ENCODE measurements at regions of chr1 and their contacts with region 1.

Region 1: GRCh38 chr1:201119206-201120197 is 7.3 kb upstream of the CACNA1S start:
- DNase-seq: no peak
- H3K4me3 ChIP-seq: no peak overlapping the region
- H3K27ac ChIP-seq: no peak overlapping the region
- H3K4me1 ChIP-seq: peaks cover 8% of the 10 kb centered on the region
- H3K27me3 ChIP-seq: no peaks in the 10 kb centered on the region
- CTCF ChIP-seq: peak; percentile 28; the same call in 1 of the 2 replicates

Region 2: DNA sequence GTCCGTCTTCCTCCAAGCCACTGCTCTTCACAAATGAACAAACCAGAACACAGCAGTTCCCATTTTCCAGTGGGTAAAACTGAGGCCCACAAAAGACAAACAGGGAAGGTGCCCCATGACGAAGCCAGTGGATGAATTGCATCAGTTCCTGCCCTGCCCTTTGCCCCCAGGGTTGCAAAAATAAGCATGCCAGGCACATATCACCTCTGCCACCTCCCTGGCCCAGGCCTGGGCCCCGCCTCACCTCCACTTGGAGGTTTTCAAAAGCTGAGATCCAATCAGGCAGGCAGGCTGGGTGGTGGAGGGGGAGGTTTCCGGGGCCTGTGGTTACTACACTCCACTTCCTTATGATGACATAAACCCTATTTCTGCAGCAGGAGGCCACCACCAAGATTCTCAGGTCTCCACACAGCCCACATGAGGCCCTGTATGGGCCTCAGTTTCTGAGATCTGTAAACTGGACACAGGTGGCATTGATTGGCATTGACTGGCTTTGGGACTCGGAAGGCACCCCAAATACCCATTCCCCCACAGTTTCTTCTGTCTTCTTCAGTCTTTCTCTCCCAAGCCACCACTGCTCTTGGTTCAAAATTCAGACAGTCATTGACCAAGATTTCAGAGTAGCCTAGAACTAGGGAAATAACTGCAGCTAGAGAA is 100.1 kb before region 1 on chr1:
- CTCF ChIA-PET with region 1: no interaction called
- POLR2A ChIA-PET with region 1: interaction called, 10 read pairs
- intact Hi-C with region 1: no loop called
- DNase-seq: peak; percentile 69 to 76
- H3K4me3 ChIP-seq: no peak overlapping the region
- H3K27ac ChIP-seq: peak overlapping the region; percentile 73
- H3K4me1 ChIP-seq: peaks cover 42% of the 10 kb centered on the region
- H3K27me3 ChIP-seq: no peaks in the 10 kb centered on the region
- CTCF ChIP-seq: no peak

Region 3: DNA sequence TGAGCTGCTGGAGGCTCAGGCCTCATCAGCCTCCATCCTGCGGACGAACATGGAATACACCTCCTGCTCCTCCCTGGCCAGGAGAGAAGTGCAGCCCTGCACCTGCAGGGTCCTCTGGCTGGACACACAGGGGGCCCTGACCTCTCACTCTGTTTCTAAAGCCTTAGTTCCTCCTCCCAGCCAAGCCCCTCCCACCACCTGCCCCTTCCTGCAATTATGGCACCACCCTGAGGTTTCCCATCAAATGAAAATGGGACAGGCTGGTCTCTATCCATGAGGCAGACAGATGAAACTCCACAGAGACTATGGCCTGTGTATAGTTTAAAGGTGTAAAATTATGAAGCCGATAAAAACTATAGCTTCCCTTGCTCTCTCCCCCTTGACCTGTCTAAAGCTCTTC is 49.9 kb before region 1 on chr1:
- CTCF ChIA-PET with region 1: no interaction called
- POLR2A ChIA-PET with region 1: no interaction called
- intact Hi-C with region 1: no loop called
- DNase-seq: no peak
- H3K4me3 ChIP-seq: no peak overlapping the region
- H3K27ac ChIP-seq: no peak overlapping the region
- H3K4me1 ChIP-seq: no peaks in the 10 kb centered on the region
- H3K27me3 ChIP-seq: peaks cover 68% of the 10 kb centered on the region
- CTCF ChIP-seq: no peak

Region 4: DNA sequence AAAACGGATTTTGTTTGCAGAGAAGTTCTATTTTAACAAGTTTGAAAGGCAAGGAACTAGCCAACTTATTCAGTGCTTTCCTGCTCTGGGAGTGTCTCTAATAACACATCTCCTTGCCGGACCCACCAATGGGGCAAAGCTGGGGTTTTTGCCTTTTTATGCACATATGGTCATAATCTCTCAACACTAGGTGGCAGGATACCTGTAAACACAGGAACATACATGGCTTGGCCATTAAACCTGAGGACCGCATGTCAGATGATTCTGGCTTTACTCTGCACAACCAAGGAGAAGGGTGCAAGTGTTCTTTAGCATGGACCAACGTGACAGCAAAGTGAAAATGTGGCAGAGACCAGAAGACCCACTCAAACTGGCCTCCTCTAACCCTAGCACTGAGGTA is 29.9 kb after region 1 on chr1:
- CTCF ChIA-PET with region 1: no interaction called
- POLR2A ChIA-PET with region 1: interaction called, 10 read pairs
- intact Hi-C with region 1: no loop called
- DNase-seq: peak in 1 of 2 experiments; percentile 47
- H3K4me3 ChIP-seq: no peak overlapping the region
- H3K27ac ChIP-seq: no peak overlapping the region
- H3K4me1 ChIP-seq: 0 out of 2 replicates have a peak, but pooled peaks cover 6% of the 10 kb centered on the region
- H3K27me3 ChIP-seq: no peaks in the 10 kb centered on the region
- CTCF ChIP-seq: peak; percentile 70

Region 5: GRCh38 chr1:201170533-201171062 is 51.1 kb after region 1 on chr1:
- CTCF ChIA-PET with region 1: no interaction called
- POLR2A ChIA-PET with region 1: no interaction called
- intact Hi-C with region 1: no loop called
- DNase-seq: peak; percentile 94 to 98
- H3K4me3 ChIP-seq: peak overlapping the region; percentile 66
- H3K27ac ChIP-seq: peak overlapping the region; percentile 82
- H3K4me1 ChIP-seq: peaks cover 42% of the 10 kb centered on the region
- H3K27me3 ChIP-seq: no peaks in the 10 kb centered on the region
- CTCF ChIP-seq: no peak

Measured in PC-9 (cell line).